Ascending aorta (tissue), 2 donors: ENCODE measurements at regions of chr5 and their contacts with region 1.

Region 1: DNA sequence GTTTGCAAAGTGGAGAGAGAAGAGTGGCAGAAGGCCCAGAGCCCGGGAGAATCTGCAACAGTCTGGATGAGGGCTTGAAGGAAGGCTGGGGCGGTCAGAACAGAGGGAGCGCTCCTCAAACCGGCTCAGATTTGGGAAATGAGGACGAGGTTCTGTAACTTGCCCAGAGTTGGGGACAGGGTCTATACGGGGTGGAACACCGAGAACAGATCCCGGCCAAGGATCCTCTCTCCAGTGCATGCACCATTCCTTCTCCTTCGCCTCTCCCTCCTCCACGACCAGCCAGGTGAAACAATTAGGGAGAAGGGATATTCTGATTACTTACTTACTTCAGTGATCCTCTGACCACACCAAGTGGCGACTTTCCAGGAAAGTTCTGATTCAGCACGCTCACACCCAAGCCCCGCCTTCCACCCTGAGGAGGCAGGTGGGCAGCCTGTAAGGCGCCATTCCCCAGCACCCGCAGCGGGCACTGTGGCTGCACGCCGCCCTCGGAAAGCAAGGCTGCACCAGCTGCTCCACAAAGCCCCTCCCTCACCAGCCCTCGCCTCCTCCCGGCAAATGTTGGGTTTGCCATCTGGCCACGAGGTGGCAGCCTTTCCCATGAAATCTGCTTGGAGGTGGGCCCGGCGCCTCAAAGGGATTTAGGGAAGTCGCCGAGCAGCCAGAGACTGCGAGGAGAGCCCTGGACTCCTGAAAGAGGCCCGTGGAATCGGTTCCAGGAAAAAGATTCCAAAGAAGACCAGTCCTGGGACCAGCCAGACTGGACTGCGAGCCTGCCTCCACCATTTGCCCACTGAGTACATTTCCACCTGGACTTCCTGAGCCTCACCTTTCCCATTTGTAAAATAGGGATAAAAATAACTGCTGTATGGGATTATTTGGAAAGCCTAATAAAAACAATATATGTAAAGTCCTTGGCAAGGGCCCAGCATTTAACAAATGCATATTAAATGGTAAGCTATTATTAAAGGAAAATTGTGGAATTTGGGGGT is 22.2 kb upstream of the WWC1 start:
- DNase-seq: peak; percentile 33 to 87
- H3K4me3 ChIP-seq: peak overlapping the region; percentile 5 to 54
- H3K27ac ChIP-seq: no peak overlapping the region
- H3K4me1 ChIP-seq: peaks cover 0 to 5% of the 10 kb centered on the region in 2 donors
- H3K27me3 ChIP-seq: no peaks in the 10 kb centered on the region
- CTCF ChIP-seq: peak; percentile 57 to 88 (median 80)

Region 2: GRCh38 chr5:168244838-168245559 is 24.2 kb before region 1 on chr5:
- intact Hi-C with region 1: no loop called
- DNase-seq: no peak
- H3K4me3 ChIP-seq: no peak overlapping the region
- H3K27ac ChIP-seq: no peak overlapping the region
- H3K4me1 ChIP-seq: no peaks in the 10 kb centered on the region
- H3K27me3 ChIP-seq: no peaks in the 10 kb centered on the region
- CTCF ChIP-seq: no peak

Region 3: DNA sequence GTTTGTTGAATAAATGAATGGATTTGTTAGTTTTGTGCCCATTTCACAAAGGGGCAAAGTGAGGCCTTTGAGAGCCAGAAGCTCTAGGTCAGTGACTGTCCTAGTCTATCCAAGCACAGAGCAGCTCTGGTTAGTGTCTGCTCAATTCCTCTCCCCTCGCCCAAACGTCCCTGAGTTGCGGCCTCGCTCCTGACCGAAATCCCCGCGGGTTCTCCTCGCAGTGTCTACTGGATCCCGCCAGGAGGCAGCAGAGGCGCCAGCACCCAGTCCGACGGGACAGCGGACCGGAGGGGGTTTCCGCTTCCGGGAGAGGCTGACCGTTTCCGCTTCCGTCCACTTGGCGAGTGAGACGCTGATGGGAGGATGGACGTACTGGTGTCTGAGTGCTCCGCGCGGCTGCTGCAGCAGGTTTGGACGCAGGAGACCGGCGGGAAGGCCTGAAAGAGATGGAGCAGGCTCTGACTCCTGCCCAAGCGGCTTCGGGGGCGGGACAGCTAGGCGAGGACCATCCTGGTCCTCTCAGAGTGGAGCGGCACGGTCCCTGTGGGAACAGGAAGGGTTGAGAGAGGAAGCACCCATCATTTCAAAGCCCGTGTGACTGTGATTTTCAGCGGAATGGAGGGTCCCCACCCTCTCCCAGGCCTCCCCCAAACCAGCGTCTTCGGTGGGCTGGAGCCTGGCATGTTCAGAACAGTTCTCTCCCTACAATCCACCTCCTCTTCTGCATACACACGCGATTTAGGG is 217.1 kb after region 1 on chr5 and contains the start of gene RARS1:
- intact Hi-C with region 1: loop called (anchors 5 kb)
- DNase-seq: peak; percentile 57 to 95
- H3K4me3 ChIP-seq: peak within 1 kb of the TSS; percentile 89 to 91
- H3K27ac ChIP-seq: peak within 1 kb of the TSS; percentile 78 to 81
- H3K4me1 ChIP-seq: peaks cover 3 to 9% of the 10 kb centered on the region in 2 donors
- H3K27me3 ChIP-seq: no peaks in the 10 kb centered on the region
- CTCF ChIP-seq: peak; percentile 91 to 98 (median 97)
- total RNA-seq, gene RARS1: 24.5 TPM